GM23248 (cell line): ENCODE measurements at regions of chr7 and their contacts with region 1.

Region 1: DNA sequence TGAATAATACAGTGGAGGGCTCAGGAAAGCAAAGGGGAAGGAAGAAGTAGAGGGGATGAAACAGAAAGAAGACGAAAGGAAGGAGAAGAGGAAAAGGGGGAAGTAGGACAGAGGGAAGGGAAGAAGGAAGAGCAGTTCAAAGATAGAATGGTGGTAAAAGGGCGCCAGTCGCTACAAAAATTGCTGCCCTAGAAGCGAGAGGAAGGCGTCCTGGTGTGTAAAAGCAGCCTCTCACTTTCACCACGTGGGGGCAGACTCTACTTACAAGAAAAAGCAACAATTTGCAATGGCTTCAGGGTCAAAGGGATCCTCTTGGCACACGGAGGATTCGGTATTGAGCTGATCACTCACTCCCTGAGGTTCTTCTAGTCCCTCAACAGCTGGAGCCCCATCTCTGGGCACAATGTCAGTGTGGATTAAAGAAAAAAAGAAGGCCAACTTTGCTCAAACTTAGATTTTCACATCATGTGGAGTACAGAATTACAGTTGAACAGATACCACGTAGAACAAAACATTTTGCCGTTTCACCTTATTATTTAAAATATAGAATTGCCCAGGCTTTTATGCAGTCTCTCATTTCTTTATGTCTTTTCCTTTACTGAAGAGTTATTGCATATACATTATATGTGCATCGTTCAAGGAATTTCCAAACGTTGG is 31.4 kb upstream of the NPVF start:
- DNase-seq: peak; percentile 89
- H3K4me3 ChIP-seq: no peak overlapping the region
- H3K27ac ChIP-seq: no peak overlapping the region
- H3K4me1 ChIP-seq: peaks cover 8% of the 10 kb centered on the region
- H3K27me3 ChIP-seq: 0 out of 2 replicates have a peak, but pooled peaks cover 4% of the 10 kb centered on the region

Region 2: GRCh38 chr7:25389489-25390106 is 129.9 kb after region 1 on chr7:
- in situ Hi-C with region 1: loop called (anchors 10 kb)
- DNase-seq: peak; percentile 68
- H3K4me3 ChIP-seq: no peak overlapping the region
- H3K27ac ChIP-seq: no peak overlapping the region
- H3K4me1 ChIP-seq: no peaks in the 10 kb centered on the region
- H3K27me3 ChIP-seq: peaks cover 5% of the 10 kb centered on the region; the same call in 1 of the 2 replicates

Region 3: DNA sequence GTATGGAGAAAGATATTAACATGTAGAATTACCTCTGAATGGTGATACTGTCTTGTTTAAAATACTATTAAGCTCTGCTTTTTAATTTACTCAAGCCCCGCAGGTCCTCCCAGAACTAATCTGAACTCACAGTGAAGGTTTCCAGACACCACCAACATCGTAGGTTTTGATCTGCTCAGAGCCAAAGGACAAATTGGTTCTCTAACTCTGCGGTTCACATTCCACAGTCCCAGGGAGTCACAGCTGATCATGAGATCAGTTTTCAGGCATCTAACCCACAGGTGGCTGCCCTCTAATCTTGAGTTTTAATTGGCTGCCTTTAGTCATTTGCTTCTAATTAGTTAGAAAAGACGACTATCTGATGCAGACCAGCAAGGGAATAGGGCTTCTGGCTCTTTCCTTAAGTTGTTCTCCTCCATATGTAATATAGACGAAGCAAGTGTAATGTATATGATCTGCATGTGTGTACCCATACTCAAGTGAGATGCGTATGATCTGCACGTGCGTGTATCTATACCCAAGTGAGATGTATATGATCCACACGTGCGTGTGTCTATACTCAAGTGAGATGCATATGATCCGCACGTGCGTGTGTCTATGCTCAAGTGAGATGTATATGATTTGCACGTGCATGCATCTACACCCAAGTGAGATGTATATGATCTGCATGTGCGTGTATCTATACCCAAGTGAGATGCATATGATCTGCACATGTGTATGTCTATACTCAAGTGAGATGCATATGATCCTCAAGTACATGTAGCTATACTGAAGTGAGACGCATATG is 300.1 kb after region 1 on chr7:
- in situ Hi-C with region 1: loop called (anchors 5 kb)
- DNase-seq: no peak
- H3K4me3 ChIP-seq: no peak overlapping the region
- H3K27ac ChIP-seq: no peak overlapping the region
- H3K4me1 ChIP-seq: no peaks in the 10 kb centered on the region
- H3K27me3 ChIP-seq: 0 out of 2 replicates have a peak, but pooled peaks cover 11% of the 10 kb centered on the region

Region 4: GRCh38 chr7:25851332-25852210 is 591.9 kb after region 1 on chr7:
- in situ Hi-C with region 1: loop called (anchors 10 kb)
- DNase-seq: peak; percentile 91
- H3K4me3 ChIP-seq: peak overlapping the region; percentile 64
- H3K27ac ChIP-seq: no peak overlapping the region
- H3K4me1 ChIP-seq: peaks cover 82% of the 10 kb centered on the region
- H3K27me3 ChIP-seq: no peaks in the 10 kb centered on the region